ENCODE measurements at regions of chr21 and their contacts with region 1.

Region 1: DNA sequence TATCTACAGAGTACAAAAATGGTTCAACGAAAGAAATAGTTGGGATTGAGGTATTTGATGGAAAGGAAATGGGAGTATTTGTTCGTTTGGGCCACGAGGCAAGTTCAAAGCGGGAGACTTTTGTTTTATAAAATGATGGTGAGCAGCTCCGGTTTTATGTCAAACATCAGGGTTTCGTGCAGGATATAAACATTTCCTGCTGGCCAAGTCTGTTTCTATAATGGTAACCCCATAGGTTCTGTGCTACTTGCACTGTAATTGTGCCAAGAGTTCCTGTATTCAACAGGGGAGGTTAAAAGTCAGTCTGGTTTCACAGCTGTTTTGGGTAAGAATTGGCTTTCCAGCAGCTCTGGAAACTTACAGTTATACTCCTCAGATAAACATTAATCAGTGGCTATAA is 290.3 kb upstream of the NRIP1 start:
- DNase-seq: no peak
- H3K4me3 ChIP-seq: no peak overlapping the region
- H3K27ac ChIP-seq: no peak overlapping the region
- H3K4me1 ChIP-seq: no peaks in the 10 kb centered on the region
- H3K27me3 ChIP-seq: no peaks in the 10 kb centered on the region
- CTCF ChIP-seq: no peak
- EP300 ChIP-seq: no peak
- POLR2A ChIP-seq: no peak

Region 2: GRCh38 chr21:15192243-15192642 is 162.8 kb before region 1 on chr21:
- intact Hi-C with region 1: loop called (anchors 10 kb)
- DNase-seq: no peak
- H3K4me3 ChIP-seq: no peak overlapping the region
- H3K27ac ChIP-seq: no peak overlapping the region
- H3K4me1 ChIP-seq: no peaks in the 10 kb centered on the region
- H3K27me3 ChIP-seq: no peaks in the 10 kb centered on the region
- CTCF ChIP-seq: no peak
- EP300 ChIP-seq: no peak
- POLR2A ChIP-seq: no peak

Region 3: GRCh38 chr21:15282665-15283064 is 72.4 kb before region 1 on chr21:
- intact Hi-C with region 1: no loop called
- DNase-seq: no peak
- H3K4me3 ChIP-seq: no peak overlapping the region
- H3K27ac ChIP-seq: no peak overlapping the region
- H3K4me1 ChIP-seq: no peaks in the 10 kb centered on the region
- H3K27me3 ChIP-seq: no peaks in the 10 kb centered on the region
- CTCF ChIP-seq: no peak
- EP300 ChIP-seq: no peak
- POLR2A ChIP-seq: no peak

Region 4: DNA sequence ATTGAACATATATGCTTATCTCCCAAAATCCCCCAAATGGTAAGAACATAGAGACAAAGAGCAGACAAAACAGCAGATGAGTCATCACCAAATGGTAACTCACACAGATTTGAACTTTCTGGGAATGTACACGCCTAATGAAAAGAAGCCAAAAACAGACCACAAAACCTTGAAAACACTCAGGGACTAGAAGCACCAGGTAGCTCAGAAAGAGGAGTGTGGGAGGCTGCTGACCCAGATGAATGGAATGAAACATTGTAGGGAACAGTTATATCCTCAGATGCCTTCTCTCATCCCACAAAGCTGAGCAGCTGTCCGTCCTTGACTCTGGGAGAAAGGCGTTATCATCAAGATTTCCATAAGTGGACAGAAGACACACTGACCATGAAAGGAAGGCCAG is 67.7 kb after region 1 on chr21:
- intact Hi-C with region 1: no loop called
- DNase-seq: no peak
- H3K4me3 ChIP-seq: no peak overlapping the region
- H3K27ac ChIP-seq: no peak overlapping the region
- H3K4me1 ChIP-seq: peaks cover 0 to 4% (median 0%) of the 10 kb centered on the region in 4 donors
- H3K27me3 ChIP-seq: no peaks in the 10 kb centered on the region
- CTCF ChIP-seq: no peak
- EP300 ChIP-seq: no peak
- POLR2A ChIP-seq: no peak

Measured in esophagus muscularis mucosa (tissue), 4 donors.